ENCODE measurements at regions of chr10 and their contacts with region 1.

Region 1: GRCh38 chr10:3785257-3785850 is 345 bp upstream of the KLF6 start:
- DNase-seq: peak; percentile 95 to 99 (median 98)

Region 2: GRCh38 chr10:3472287-3473051 is 312.9 kb before region 1 on chr10:
- intact Hi-C with region 1: loop called (anchors 10 kb)
- DNase-seq: peak in 40 of 42 donors; percentile 38 to 89 (median 72)